OCI-LY7 (cell line): ENCODE measurements at regions of chr15 and their contacts with region 1.

Region 1: DNA sequence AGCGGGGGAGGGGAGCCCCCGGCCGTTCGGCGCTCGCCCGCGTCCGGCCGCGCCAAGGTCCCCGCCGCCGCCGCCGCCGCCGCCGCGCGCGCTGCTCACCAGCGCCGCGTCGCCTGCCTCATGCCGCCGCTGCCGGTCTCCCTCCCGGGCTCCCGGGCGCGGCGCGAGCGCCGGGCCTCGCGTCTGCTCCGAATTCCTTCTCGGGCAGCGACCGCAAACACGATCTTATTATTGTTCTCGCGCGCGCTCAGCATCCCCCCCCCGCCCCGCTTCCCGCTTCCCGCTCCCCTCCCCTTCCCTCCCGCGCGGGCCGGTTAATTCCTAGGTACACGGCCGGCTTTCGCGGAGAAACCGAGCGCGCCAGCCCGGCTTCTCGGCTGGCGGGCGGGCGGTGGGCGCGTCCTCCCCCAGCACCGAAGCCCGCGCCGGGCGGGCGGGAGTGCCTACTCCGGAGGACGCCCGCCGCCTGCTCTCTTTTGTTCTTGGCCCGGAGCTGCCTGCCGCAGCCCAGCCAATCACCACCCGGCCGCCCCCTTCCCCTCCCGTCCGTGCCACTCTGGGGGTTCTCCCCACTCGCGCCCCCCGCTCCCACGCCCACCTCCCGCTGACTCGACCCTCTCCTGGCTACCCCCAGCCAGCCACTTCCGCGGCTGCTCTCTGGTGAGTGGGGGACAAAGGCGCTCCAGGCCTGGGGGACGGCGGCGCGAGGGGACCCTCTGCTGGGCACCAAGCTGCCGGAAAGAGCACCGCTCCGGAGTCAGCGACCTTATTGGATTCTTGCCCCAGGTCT is at the start of gene HDGFL3:
- DNase-seq: peak; percentile 72
- H3K4me3 ChIP-seq: peak within 1 kb of the TSS; percentile 89
- H3K27ac ChIP-seq: peak within 1 kb of the TSS; percentile 47
- H3K4me1 ChIP-seq: peaks cover 25% of the 10 kb centered on the region
- CTCF ChIP-seq: peak; percentile 57
- total RNA-seq, gene HDGFL3: 29.3 and 57.6 TPM in 2 replicates

Region 2: GRCh38 chr15:82530606-82531379 is 677.0 kb before region 1 on chr15:
- CTCF ChIA-PET with region 1: no interaction called
- POLR2A ChIA-PET with region 1: no interaction called
- intact Hi-C with region 1: loop called (anchors 10 kb)
- DNase-seq: peak; percentile 76
- H3K4me3 ChIP-seq: no peak overlapping the region
- H3K27ac ChIP-seq: no peak overlapping the region
- H3K4me1 ChIP-seq: peaks cover 11% of the 10 kb centered on the region
- CTCF ChIP-seq: peak; percentile 92

Region 3: GRCh38 chr15:82849556-82850512 is 358.0 kb before region 1 on chr15:
- CTCF ChIA-PET with region 1: no interaction called
- POLR2A ChIA-PET with region 1: no interaction called
- intact Hi-C with region 1: loop called (anchors 5 kb)
- DNase-seq: peak; percentile 82
- H3K4me3 ChIP-seq: no peak overlapping the region
- H3K27ac ChIP-seq: no peak overlapping the region
- H3K4me1 ChIP-seq: peaks cover 19% of the 10 kb centered on the region
- CTCF ChIP-seq: peak; percentile 87

Region 4: GRCh38 chr15:83066734-83067637 is 140.8 kb before region 1 on chr15 and contains the start of gene BTBD1:
- CTCF ChIA-PET with region 1: no interaction called
- POLR2A ChIA-PET with region 1: interaction called, 5 read pairs
- intact Hi-C with region 1: loop called (anchors 1 kb)
- DNase-seq: peak; percentile 95
- H3K4me3 ChIP-seq: peak within 1 kb of the TSS; percentile 80
- H3K27ac ChIP-seq: peak within 1 kb of the TSS; percentile 82
- H3K4me1 ChIP-seq: peaks cover 44% of the 10 kb centered on the region
- CTCF ChIP-seq: peak; percentile 5; the same call in 1 of the 2 replicates
- total RNA-seq, gene BTBD1: 95.4 and 99.5 TPM in 2 replicates

Region 5: GRCh38 chr15:83983634-83984458 is 776.0 kb after region 1 on chr15:
- CTCF ChIA-PET with region 1: no interaction called
- POLR2A ChIA-PET with region 1: no interaction called
- intact Hi-C with region 1: loop called (anchors 5 kb)
- DNase-seq: peak; percentile 43
- H3K4me3 ChIP-seq: peak overlapping the region; percentile 39
- H3K27ac ChIP-seq: peak overlapping the region; percentile 49
- H3K4me1 ChIP-seq: peaks cover 28% of the 10 kb centered on the region
- CTCF ChIP-seq: no peak